ENCODE measurements at regions of chr19 and their contacts with region 1.

Region 1: DNA sequence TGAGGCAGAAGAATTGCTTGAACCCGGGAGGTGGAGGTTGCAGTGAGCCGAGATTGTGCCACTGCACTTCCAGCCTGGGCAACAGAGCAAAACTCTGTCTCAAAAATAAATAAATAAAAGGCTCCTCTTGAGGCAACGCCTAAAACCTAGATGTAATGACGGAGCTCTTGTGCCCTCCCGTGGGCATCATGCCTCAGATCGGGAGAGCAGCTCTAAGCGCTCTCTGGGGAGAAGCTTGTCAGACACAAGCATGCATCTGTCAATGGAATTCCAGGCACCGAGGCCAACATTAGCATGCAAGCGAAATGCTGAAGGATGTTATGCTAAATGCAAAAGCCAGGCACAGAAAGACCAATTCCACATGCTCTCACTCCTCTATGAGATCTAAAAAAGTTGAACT is 45.6 kb upstream of the MRI1 start:
- DNase-seq: no peak
- ATAC-seq: no peak; the same call in 1 of the 2 replicates
- H3K4me3 ChIP-seq: no peak overlapping the region
- H3K27ac ChIP-seq: no peak overlapping the region
- H3K4me1 ChIP-seq: peaks cover 0 to 7% of the 10 kb centered on the region in 2 experiments; a peak in 3 of 4 replicates
- H3K27me3 ChIP-seq: no peaks in the 10 kb centered on the region
- CTCF ChIP-seq: 0 out of 6 replicates have a peak, but pooled peaks of 1 of the 3 experiments have one; percentile 8
- POLR2A ChIP-seq: no peak
- RAD21 ChIP-seq: peak; percentile 47

Region 2: GRCh38 chr19:13262450-13262849 is 456.3 kb before region 1 on chr19:
- CTCF ChIA-PET with region 1: no interaction called
- POLR2A ChIA-PET with region 1: no interaction called
- RAD21 ChIA-PET with region 1: no interaction called
- intact Hi-C with region 1: no loop called
- DNase-seq: no peak
- ATAC-seq: peak; percentile 55
- H3K4me3 ChIP-seq: no peak overlapping the region
- H3K27ac ChIP-seq: no peak overlapping the region
- H3K4me1 ChIP-seq: peaks cover 24 to 35% of the 10 kb centered on the region in 2 experiments
- H3K27me3 ChIP-seq: no peaks in the 10 kb centered on the region
- CTCF ChIP-seq: peak; percentile 27 to 76 (median 64); a peak in 5 of 6 replicates
- POLR2A ChIP-seq: no peak
- RAD21 ChIP-seq: peak; percentile 79

Region 3: DNA sequence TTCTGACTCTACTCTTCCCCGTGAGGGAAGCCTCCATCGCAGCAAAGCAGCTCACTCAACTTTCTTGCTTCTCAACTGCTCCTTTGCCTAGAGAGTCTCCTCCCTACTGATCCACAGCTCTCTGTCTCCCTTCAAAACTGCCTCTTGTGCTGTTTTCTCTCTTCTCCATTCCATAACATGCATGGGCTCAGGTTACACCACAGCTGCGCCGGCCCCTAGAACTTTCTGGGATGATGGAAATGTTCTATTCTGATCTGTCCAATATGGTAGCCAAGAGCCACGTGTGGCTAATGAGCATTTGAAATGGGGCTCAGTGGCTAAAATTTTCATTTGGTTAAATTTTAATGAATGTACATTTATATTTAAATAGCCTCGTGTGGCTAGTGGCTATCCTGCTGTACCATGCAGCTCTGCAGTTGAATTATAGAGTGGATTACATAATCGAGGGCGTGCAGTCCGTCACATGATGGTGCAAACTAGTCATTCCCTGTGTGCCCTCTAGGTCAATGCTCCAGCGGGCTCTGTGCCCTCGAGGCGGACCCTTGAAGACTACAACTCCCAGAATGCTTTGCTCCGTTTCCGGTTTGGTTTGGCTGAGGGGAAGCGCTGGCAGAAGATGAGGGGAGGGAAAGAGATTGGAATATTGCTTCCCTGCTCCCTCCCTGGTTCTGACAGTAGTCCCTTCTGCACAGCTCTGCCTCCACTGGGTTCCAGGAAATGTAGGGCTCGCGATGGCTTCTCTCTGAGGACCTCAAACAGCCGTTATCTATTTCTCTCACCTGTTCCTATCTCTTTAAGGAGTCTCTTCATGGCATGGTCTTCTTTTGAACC is 322.3 kb before region 1 on chr19:
- CTCF ChIA-PET with region 1: no interaction called
- POLR2A ChIA-PET with region 1: no interaction called
- RAD21 ChIA-PET with region 1: no interaction called
- intact Hi-C with region 1: no loop called
- DNase-seq: peak; percentile 72
- ATAC-seq: peak; percentile 72
- H3K4me3 ChIP-seq: no peak overlapping the region
- H3K27ac ChIP-seq: no peak overlapping the region
- H3K4me1 ChIP-seq: peaks cover 24 to 56% of the 10 kb centered on the region in 2 experiments
- H3K27me3 ChIP-seq: no peaks in the 10 kb centered on the region
- CTCF ChIP-seq: no peak
- POLR2A ChIP-seq: no peak
- RAD21 ChIP-seq: no peak

Region 4: GRCh38 chr19:13597640-13598039 is 121.1 kb before region 1 on chr19:
- CTCF ChIA-PET with region 1: interaction called, 42 read pairs
- POLR2A ChIA-PET with region 1: no interaction called
- RAD21 ChIA-PET with region 1: interaction called, 3 to 7 read pairs
- intact Hi-C with region 1: loop called (anchors 1 kb)
- DNase-seq: peak; percentile 57
- ATAC-seq: peak; percentile 98
- H3K4me3 ChIP-seq: no peak overlapping the region
- H3K27ac ChIP-seq: no peak overlapping the region
- H3K4me1 ChIP-seq: no peaks in the 10 kb centered on the region
- H3K27me3 ChIP-seq: 0 out of 2 replicates have a peak, but pooled peaks cover 4% of the 10 kb centered on the region
- CTCF ChIP-seq: peak; percentile 59 to 72 (median 64)
- POLR2A ChIP-seq: no peak
- RAD21 ChIP-seq: peak; percentile 95

Region 5: DNA sequence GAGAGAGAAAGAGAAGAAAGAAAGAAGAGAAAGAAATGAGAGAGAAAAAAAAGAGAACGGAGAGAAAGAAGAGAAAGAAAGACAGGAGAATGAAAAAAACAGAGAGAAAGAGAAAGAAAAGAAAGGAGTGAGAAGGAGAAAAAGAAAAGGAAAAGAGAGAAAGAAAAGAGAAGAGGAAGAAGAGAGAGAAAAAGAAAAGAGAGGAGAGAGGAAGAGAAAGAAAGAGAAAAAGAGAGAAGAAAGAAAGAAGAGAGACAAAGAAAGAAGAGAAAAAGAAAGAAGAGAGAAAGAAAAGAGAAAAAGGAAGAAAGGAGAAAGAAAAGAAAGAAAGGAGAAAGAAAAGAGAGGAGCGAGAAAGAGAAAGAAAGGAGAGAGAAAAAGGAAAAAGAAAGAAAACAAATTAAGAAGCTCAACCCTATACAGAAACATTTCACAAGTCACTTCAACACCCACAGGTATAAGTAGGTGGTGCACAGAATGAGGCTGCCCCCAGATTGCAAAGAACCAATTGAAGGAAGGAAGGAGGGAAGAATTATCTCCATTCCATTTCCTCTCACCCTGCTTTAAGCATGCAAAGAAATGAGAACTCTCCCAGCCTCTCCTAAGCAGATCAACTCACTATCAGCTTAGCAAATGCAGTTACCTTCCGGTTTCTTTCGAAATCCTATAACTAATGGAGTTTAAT is 113.7 kb before region 1 on chr19:
- CTCF ChIA-PET with region 1: interaction called, 42 read pairs
- POLR2A ChIA-PET with region 1: no interaction called
- RAD21 ChIA-PET with region 1: no interaction called
- intact Hi-C with region 1: no loop called
- DNase-seq: no peak
- ATAC-seq: no peak
- H3K4me3 ChIP-seq: no peak overlapping the region
- H3K27ac ChIP-seq: no peak overlapping the region
- H3K4me1 ChIP-seq: no peaks in the 10 kb centered on the region
- H3K27me3 ChIP-seq: no peaks in the 10 kb centered on the region
- CTCF ChIP-seq: no peak
- POLR2A ChIP-seq: no peak
- RAD21 ChIP-seq: no peak

Region 6: DNA sequence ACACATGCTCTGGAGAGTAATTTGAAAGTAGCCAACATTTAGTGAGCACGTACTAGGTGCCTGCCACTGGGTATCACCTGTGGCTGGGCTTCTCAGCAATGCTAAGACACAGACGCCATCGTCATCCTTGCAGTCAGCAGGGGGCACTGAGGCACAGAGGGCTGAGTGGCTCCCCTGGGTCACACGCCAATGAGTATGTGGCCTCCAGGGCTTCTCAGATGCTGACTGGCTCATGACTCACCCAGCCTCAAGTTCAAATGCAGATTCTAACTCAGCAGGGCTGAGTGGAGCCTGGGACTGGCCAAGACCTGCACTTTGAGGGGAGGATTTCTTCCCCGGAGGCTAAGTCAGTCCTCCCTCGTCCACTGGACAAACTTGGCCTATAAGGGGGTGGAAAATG is 97.3 kb before region 1 on chr19:
- CTCF ChIA-PET with region 1: interaction called, 3 read pairs
- POLR2A ChIA-PET with region 1: no interaction called
- RAD21 ChIA-PET with region 1: interaction called in 1 of 2 experiments, 7 read pairs
- intact Hi-C with region 1: loop called (anchors 10 kb)
- DNase-seq: peak; percentile 75
- ATAC-seq: peak; percentile 97
- H3K4me3 ChIP-seq: no peak overlapping the region
- H3K27ac ChIP-seq: peak overlapping the region; percentile 5; the same call in 1 of the 2 replicates
- H3K4me1 ChIP-seq: peaks cover 10 to 18% of the 10 kb centered on the region in 2 experiments
- H3K27me3 ChIP-seq: peaks cover 20% of the 10 kb centered on the region; the same call in 1 of the 2 replicates
- CTCF ChIP-seq: peak in 2 of 3 experiments; percentile 9 to 56; a peak in 1 of 6 replicates
- POLR2A ChIP-seq: no peak
- RAD21 ChIP-seq: peak; percentile 79

Region 7: GRCh38 chr19:13731147-13731964 is 12.6 kb after region 1 on chr19:
- CTCF ChIA-PET with region 1: interaction called, 13 read pairs
- POLR2A ChIA-PET with region 1: interaction called, 7 read pairs
- RAD21 ChIA-PET with region 1: interaction called in 1 of 2 experiments, 3 read pairs
- intact Hi-C with region 1: no loop called
- DNase-seq: peak; percentile 94
- ATAC-seq: peak; percentile 98
- H3K4me3 ChIP-seq: peak overlapping the region; percentile 76 to 77
- H3K27ac ChIP-seq: peak overlapping the region; percentile 100
- H3K4me1 ChIP-seq: peaks cover 24 to 32% of the 10 kb centered on the region in 2 experiments
- H3K27me3 ChIP-seq: no peaks in the 10 kb centered on the region
- CTCF ChIP-seq: no peak
- POLR2A ChIP-seq: peak; percentile 69
- RAD21 ChIP-seq: no peak

Region 8: DNA sequence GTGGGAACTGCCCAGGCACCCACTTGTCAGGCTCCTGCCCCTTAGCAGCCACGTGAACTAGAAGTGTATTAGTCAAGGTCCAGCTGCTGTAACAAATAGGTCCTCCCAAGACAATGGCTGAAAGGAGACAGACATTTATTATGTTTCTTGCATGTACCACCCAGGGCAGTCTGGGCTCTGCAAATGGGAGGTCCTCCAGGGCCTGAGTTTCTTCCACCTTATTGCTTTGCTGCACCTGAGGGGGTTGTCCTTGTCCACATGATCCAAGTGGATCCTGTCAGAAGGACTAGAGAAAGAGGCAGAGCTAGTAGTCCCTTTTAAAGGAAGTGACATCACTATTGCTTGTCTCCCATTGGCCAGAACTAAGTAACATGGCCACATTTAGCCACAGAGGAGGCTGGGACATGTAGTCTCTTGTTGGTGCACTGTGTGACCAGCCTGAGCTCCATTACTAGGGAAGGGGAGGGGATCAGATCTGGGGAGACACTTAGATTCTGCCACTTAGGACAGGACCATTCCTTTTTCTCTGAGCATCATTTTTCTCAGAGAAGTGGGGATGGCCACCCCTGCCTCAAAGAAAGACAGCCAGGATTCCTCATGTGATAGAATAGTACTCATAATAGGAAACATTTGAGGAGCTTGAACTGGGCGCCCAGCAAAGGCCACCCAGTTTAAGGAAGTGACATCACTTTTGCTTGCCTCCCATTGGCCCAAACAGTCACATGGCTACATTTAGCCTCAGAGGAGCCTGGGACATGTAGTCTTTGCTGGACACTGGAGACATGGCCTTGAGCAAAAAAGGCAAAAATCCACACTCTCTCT is 202.4 kb after region 1 on chr19:
- CTCF ChIA-PET with region 1: no interaction called
- POLR2A ChIA-PET with region 1: no interaction called
- RAD21 ChIA-PET with region 1: no interaction called
- intact Hi-C with region 1: no loop called
- DNase-seq: peak; percentile 39
- ATAC-seq: peak; percentile 91
- H3K4me3 ChIP-seq: no peak overlapping the region
- H3K27ac ChIP-seq: no peak overlapping the region
- H3K4me1 ChIP-seq: no peaks in the 10 kb centered on the region
- H3K27me3 ChIP-seq: no peaks in the 10 kb centered on the region
- CTCF ChIP-seq: no peak
- POLR2A ChIP-seq: no peak
- RAD21 ChIP-seq: no peak